Astrocyte of the cerebellum (primary cell): ENCODE measurements at regions of chrX and their contacts with region 1.

Region 1: DNA sequence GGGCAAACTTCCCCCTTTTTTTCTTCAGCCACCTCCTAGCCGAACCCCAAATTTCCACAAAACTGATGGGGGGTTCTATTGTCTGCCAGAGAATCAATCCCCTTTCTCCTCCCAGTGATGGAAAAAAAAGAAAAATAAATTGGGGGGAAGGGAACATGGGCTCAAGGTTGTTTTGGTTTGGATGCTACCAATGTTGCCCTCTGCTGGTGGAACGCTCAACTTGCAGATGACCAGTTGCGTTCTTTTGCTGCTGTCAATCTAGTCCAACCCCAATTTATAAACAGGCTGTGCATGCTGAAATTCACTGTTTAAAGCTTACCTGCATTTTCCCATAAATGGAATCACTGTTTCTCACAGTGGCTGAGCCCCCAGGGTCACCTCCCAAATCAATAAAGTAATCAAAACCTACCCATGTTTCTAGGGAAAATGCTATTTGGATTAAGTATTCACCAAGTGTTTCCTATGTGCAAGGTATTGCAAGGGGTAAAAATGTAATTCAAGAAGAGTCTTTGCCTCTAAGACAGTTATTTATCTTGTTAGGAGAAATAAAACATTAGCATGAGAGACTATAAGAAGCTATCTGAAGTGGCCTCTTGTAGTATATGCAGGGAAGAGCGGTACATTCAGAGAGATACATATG is 116.7 kb upstream of the TMEM164 start:
- DNase-seq: peak; percentile 34
- H3K4me3 ChIP-seq: no peak overlapping the region
- CTCF ChIP-seq: peak; percentile 76

Region 2: GRCh38 chrX:109714340-109714958 is 171.8 kb before region 1 on chrX:
- in situ Hi-C with region 1: loop called (anchors 10 kb)
- DNase-seq: peak; percentile 33
- H3K4me3 ChIP-seq: no peak overlapping the region
- CTCF ChIP-seq: no peak